Pancreas (tissue), 10 donors: ENCODE measurements at regions of chr13 and their contacts with region 1.

Region 1: DNA sequence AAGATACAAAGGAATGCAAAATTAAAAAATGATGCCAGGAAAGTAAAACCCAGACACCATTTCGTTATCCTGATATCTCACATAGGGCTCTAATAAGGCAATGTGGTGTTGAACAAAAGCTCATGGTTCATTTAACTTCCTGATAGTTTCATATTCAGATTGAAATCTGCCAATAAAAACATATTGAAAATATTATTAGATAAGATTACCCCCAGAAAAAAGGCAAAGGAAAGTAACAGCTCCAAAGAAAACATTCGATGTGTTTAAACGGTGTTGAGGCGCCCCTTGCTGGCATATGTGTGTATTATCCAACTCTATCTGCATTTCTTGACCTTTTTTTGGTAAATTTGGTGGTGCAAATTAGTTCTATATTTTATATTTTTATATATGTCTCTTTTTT is 75.9 kb downstream of the ESD start:
- DNase-seq: peak in 3 of 6 donors; percentile 9 to 41 (median 20)
- ATAC-seq: peak in 3 of 4 donors; percentile 81 to 86 (median 83)
- H3K4me3 ChIP-seq: no peak overlapping the region
- H3K27ac ChIP-seq: no peak overlapping the region
- H3K4me1 ChIP-seq: peaks cover 0 to 4% (median 0%) of the 10 kb centered on the region in 3 donors
- H3K27me3 ChIP-seq: no peaks in the 10 kb centered on the region
- CTCF ChIP-seq: peak in 3 of 4 donors; percentile 43 to 52 (median 51)

Region 2: DNA sequence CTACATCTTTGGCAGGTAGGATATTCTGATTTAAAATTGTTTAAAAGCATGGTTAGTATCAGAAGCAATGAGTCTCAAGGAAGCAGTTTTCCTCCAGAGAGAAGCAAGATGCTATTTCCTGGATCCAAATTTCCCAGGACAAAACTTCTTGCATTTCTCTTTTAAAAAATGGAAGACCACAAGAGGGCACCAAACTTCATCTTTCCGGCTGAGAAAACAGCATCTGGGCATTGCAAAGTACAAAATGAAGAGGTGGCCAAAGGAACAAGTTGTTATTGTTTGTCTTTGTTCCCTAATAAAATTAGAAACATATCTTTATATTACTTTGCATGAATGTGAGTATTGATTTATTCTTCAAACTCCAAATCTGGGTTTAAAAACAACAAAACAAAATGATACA is 228.1 kb before region 1 on chr13:
- intact Hi-C with region 1: loop called in 2 of 3 experiments (anchors 2 to 5 kb)
- DNase-seq: peak in 2 of 6 donors; percentile 4 to 14
- ATAC-seq: peak in 3 of 4 donors; percentile 66 to 74 (median 67)
- H3K4me3 ChIP-seq: no peak overlapping the region
- H3K27ac ChIP-seq: no peak overlapping the region
- H3K4me1 ChIP-seq: no peaks in the 10 kb centered on the region
- H3K27me3 ChIP-seq: no peaks in the 10 kb centered on the region
- CTCF ChIP-seq: peak in 3 of 4 donors; percentile 23 to 58 (median 35)

Region 3: DNA sequence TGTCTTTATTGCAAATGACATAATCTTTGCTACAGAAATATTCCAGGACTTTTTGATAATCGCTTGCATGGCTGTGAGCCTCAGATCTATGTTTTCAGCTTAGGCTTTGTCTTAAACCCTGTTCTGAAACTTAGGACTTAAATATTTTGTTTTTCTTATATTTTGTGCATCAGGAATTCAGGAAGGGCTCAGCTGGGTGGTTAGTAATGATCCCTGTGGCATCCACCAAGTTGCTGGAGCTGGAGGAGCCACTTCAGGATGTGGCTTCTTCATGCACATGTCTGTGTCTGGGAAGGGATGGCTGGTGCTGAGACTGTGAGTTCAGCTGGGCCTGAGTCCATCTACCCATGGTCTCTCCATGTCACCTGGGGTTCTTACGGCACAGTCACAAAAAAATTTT is 217.0 kb before region 1 on chr13:
- intact Hi-C with region 1: no loop called
- DNase-seq: no peak
- ATAC-seq: no peak
- H3K4me3 ChIP-seq: no peak overlapping the region
- H3K27ac ChIP-seq: no peak overlapping the region
- H3K4me1 ChIP-seq: no peaks in the 10 kb centered on the region
- H3K27me3 ChIP-seq: no peaks in the 10 kb centered on the region
- CTCF ChIP-seq: no peak

Region 4: GRCh38 chr13:46553886-46554858 is 166.9 kb before region 1 on chr13:
- intact Hi-C with region 1: loop called in 2 of 3 experiments (anchors 5 kb)
- DNase-seq: peak; percentile 53 to 87 (median 62)
- ATAC-seq: peak; percentile 67 to 79 (median 74)
- H3K4me3 ChIP-seq: peak overlapping the region; percentile 72 to 95 (median 91)
- H3K27ac ChIP-seq: peak overlapping the region; percentile 67 to 86 (median 77)
- H3K4me1 ChIP-seq: no peaks in the 10 kb centered on the region
- H3K27me3 ChIP-seq: no peaks in the 10 kb centered on the region
- CTCF ChIP-seq: no peak